Activated CD4-positive, alpha-beta T cell treated with anti-CD3 and anti-CD28 coated beads, Interleukin-2, amount 10 ng/mL, durations not matched to agents 24 days and 14 days (primary cell): ENCODE measurements at regions of chr3 and their contacts with region 1.

Region 1: GRCh38 chr3:11236595-11237461 is 35.4 kb upstream of the ATG7 start:
- DNase-seq: peak; percentile 93
- H3K4me3 Mint-ChIP-seq: no peak overlapping the region
- H3K27ac Mint-ChIP-seq: no peak overlapping the region
- H3K4me1 Mint-ChIP-seq: peaks cover 21% of the 10 kb centered on the region
- H3K27me3 Mint-ChIP-seq: peaks cover 27% of the 10 kb centered on the region

Region 2: GRCh38 chr3:11250902-11251813 is 14.3 kb after region 1 on chr3:
- intact Hi-C with region 1: loop called (anchors 1 kb)
- DNase-seq: no peak
- H3K4me3 Mint-ChIP-seq: peak overlapping the region; percentile 25
- H3K27ac Mint-ChIP-seq: peak overlapping the region; percentile 63
- H3K4me1 Mint-ChIP-seq: peaks cover 5% of the 10 kb centered on the region
- H3K27me3 Mint-ChIP-seq: peaks cover 3% of the 10 kb centered on the region

Region 3: DNA sequence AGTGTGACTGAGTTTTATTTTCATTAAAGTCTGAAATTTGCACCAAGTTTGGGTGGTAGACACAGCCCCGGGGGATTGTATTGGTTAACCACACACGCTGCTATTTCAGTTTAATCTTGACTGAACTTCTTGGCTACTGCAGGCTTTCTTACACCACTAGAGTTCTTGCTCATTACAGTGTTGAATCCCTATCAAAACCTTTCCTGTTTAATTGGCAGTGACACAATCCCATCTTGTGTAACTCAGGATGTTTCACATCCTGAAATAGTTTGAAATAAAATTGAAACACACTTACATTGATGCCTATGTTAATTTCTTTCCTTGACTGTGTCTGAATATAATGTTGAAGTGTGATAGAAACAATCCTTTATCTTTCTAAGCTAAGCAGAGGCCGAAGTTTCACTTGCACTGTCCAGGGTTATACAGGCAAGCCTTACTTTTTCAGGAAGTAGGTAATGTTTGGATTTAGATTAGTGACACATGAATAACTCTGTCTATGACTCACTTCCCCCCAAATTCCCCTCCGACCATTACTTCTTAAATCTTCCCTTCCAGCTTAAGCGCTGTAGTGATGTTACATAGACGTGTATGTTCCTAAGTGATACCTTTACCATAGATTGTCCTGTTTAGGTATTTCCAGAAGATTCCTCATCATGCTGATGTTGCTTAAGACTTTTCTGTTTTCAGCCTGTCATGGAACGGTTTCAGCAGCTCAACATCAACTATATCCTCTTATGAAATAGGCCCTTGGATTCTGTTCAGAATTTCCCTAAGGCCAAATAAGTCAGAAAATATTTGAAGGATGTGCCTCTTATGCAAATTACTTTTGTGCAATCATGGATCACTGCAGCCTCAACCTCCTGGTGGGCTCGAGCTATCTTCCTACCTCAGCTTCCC is 52.2 kb after region 1 on chr3:
- intact Hi-C with region 1: loop called (anchors 5 kb)
- DNase-seq: no peak
- H3K4me3 Mint-ChIP-seq: peak overlapping the region; percentile 51
- H3K27ac Mint-ChIP-seq: peak overlapping the region; percentile 90
- H3K4me1 Mint-ChIP-seq: peaks cover 44% of the 10 kb centered on the region
- H3K27me3 Mint-ChIP-seq: no peaks in the 10 kb centered on the region

Region 4: DNA sequence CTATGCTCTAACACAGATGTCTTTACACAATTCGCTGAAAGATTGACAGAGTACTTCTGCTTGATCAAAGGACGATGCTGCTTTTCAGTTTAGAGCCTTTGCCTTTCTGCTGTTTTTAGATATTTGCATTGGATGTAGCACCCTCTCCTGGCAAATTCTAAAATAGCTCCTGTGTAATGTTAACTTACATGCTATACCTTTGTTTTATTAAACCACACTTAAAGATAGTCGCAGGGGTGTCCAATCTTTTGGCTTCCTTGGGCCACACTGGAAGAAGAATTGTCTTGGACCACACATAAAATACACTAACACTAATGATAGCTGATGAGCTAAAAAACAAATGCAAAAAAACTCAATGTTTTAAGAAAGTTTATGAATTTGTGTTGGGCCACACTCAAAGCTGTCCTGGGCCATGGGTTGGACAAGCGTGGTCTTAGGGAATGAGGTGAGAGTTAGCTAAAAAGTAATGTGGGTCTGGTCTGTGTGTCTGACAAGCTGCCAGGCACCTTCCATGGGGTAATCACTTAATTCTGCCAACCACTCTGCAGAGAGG is 98.3 kb after region 1 on chr3:
- intact Hi-C with region 1: loop called (anchors 1 kb)
- DNase-seq: peak; percentile 80
- H3K4me3 Mint-ChIP-seq: no peak overlapping the region
- H3K27ac Mint-ChIP-seq: no peak overlapping the region
- H3K4me1 Mint-ChIP-seq: peaks cover 5% of the 10 kb centered on the region
- H3K27me3 Mint-ChIP-seq: no peaks in the 10 kb centered on the region

Region 5: GRCh38 chr3:11643605-11644087 is 406.8 kb after region 1 on chr3 and contains the start of gene VGLL4:
- intact Hi-C with region 1: loop called (anchors 5 kb)
- DNase-seq: peak; percentile 91
- H3K4me3 Mint-ChIP-seq: peak within 1 kb of the TSS; percentile 99
- H3K27ac Mint-ChIP-seq: peak within 1 kb of the TSS; percentile 97
- H3K4me1 Mint-ChIP-seq: peaks cover 37% of the 10 kb centered on the region
- H3K27me3 Mint-ChIP-seq: peaks cover 13% of the 10 kb centered on the region
- total RNA-seq, gene VGLL4: 43.4 and 44.0 TPM in 2 replicates